ENCODE measurements at regions of chr15 and their contacts with region 1.

Region 1: DNA sequence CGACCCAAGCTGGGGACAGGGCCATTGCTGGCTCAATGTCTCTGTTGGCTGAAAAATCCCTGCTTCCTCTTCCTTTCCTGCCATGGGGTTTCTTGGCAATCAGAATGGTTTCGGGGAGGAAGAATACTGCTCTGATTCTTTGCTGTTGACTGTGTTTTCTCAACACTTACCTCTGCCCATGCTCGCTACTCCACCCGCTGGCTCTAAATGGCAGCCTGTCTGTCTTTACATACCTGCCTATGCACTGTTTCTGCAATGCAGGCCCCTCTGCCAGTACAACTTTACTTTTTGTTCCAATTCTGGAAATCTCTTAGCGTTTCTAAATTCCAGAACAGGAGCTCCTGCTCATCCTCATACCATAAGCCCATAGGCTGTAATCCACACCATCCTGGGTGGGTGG is 38.4 kb upstream of the SNRPA1 start:
- DNase-seq: no peak
- ATAC-seq: peak in 1 of 2 donors; percentile 16
- H3K4me3 Mint-ChIP-seq: peak overlapping the region in 3 of 10 donors; percentile 9 to 67 (median 19)
- H3K27ac Mint-ChIP-seq: peak overlapping the region; percentile 75 to 96 (median 90)
- H3K4me1 Mint-ChIP-seq: peaks cover 8 to 42% (median 20%) of the 10 kb centered on the region in 4 donors
- H3K27me3 Mint-ChIP-seq: peaks cover 0 to 12% (median 1%) of the 10 kb centered on the region in 5 donors

Region 2: DNA sequence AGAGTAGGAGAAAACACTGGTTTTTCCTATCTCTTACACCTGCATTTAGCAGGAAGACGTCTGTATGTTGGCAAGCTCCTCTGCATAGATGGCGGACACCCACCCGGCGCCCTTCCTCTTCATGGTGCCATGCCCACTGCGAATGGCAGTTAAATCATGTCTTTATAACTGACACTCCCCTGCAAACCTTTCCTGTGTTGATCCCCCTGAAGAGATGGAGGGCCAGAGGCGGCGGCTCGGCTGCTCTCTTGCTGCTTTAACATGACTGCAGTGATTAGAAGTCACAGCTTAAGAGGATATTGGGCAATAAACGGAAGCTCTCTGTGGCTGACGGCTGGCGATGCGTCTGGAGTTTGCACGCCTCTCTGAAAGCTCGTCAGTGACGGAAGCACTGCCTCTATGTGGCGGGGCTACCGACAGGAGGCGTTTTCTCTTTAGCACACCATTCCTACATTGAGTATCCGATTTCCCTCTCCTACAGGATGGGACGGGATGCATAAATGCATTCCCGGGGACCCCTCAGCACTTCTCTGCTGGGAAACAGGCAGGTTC is 12.8 kb before region 1 on chr15:
- POLR2A ChIA-PET with region 1: interaction called, 10 read pairs
- DNase-seq: peak; percentile 32 to 81 (median 62)
- ATAC-seq: peak; percentile 99 to 100
- H3K4me3 Mint-ChIP-seq: peak overlapping the region; percentile 79 to 95 (median 86)
- H3K27ac Mint-ChIP-seq: peak overlapping the region; percentile 87 to 98 (median 96)
- H3K4me1 Mint-ChIP-seq: peaks cover 9 to 16% (median 14%) of the 10 kb centered on the region in 4 donors
- H3K27me3 Mint-ChIP-seq: peaks cover 0 to 12% (median 8%) of the 10 kb centered on the region in 5 donors

Region 3: DNA sequence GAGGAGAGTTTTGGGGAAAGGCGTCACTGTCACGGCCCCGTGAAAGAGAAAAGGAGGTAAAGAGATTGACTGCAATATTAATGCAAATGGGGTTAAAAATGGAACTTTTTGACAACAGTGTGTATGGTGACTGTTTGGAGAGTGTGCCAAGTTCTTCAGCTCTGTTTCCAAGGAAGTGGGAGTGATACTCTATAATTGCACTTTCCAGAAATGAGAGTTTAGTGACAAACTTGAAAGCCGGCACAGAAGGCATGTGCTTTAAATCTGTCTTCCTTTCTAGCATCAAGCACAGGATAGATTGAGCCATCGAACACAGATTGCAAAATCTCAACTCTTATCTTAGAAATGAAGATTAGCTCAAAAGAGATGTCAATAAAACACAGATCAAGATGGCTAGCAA is 13.5 kb after region 1 on chr15:
- POLR2A ChIA-PET with region 1: no interaction called
- DNase-seq: no peak
- ATAC-seq: no peak
- H3K4me3 Mint-ChIP-seq: no peak overlapping the region
- H3K27ac Mint-ChIP-seq: no peak overlapping the region
- H3K4me1 Mint-ChIP-seq: no peaks in the 10 kb centered on the region
- H3K27me3 Mint-ChIP-seq: peaks cover 10 to 25% (median 16%) of the 10 kb centered on the region in 5 donors

Measured in naive thymus-derived CD8-positive, alpha-beta T cell (primary cell).